Activated B cell treated with CpG ODN at 0.5 μM for 24 hours (primary cell): ENCODE measurements at regions of chrX and their contacts with region 1.

Region 1: GRCh38 chrX:19990556-19991349 is at the start of gene BCLAF3:
- DNase-seq: peak; percentile 83
- ATAC-seq: peak; percentile 92
- H3K4me3 Mint-ChIP-seq: peak within 1 kb of the TSS; percentile 86
- H3K27ac Mint-ChIP-seq: peak within 1 kb of the TSS; percentile 85
- H3K4me1 Mint-ChIP-seq: peaks cover 16% of the 10 kb centered on the region
- H3K27me3 Mint-ChIP-seq: no peaks in the 10 kb centered on the region
- CTCF ChIP-seq: no peak
- total RNA-seq, gene BCLAF3: 11.6 and 15.3 TPM in 2 replicates

Region 2: GRCh38 chrX:19544693-19545305 is 446.0 kb before region 1 on chrX:
- CTCF ChIA-PET with region 1: no interaction called
- POLR2A ChIA-PET with region 1: no interaction called
- intact Hi-C with region 1: loop called (anchors 1 kb)
- DNase-seq: no peak
- ATAC-seq: peak; percentile 60
- H3K4me3 Mint-ChIP-seq: no peak overlapping the region
- H3K27ac Mint-ChIP-seq: no peak overlapping the region
- H3K4me1 Mint-ChIP-seq: no peaks in the 10 kb centered on the region
- H3K27me3 Mint-ChIP-seq: no peaks in the 10 kb centered on the region
- CTCF ChIP-seq: no peak

Region 3: DNA sequence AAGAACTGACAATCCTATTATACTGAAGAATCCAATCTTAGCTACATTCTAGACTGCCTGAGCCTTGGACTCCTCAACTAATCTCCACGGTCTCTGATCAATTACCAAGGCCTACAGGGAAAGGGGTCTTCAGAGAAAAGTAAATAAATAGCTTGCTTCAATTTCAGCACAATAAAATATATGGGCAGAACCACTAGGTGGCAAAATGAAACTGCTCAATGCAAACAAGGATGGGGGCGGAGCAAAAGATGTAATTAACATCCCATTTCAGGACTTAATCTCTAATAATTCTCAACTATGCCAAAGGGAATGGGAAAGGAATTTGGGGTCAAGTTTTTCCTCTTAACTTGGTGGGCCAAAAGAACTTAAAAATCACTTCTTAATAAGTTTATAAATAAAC is 397.1 kb before region 1 on chrX:
- CTCF ChIA-PET with region 1: no interaction called
- POLR2A ChIA-PET with region 1: no interaction called
- intact Hi-C with region 1: loop called (anchors 1 kb)
- DNase-seq: no peak
- ATAC-seq: no peak
- H3K4me3 Mint-ChIP-seq: no peak overlapping the region
- H3K27ac Mint-ChIP-seq: no peak overlapping the region
- H3K4me1 Mint-ChIP-seq: peaks cover 2% of the 10 kb centered on the region
- H3K27me3 Mint-ChIP-seq: no peaks in the 10 kb centered on the region
- CTCF ChIP-seq: no peak

Region 4: DNA sequence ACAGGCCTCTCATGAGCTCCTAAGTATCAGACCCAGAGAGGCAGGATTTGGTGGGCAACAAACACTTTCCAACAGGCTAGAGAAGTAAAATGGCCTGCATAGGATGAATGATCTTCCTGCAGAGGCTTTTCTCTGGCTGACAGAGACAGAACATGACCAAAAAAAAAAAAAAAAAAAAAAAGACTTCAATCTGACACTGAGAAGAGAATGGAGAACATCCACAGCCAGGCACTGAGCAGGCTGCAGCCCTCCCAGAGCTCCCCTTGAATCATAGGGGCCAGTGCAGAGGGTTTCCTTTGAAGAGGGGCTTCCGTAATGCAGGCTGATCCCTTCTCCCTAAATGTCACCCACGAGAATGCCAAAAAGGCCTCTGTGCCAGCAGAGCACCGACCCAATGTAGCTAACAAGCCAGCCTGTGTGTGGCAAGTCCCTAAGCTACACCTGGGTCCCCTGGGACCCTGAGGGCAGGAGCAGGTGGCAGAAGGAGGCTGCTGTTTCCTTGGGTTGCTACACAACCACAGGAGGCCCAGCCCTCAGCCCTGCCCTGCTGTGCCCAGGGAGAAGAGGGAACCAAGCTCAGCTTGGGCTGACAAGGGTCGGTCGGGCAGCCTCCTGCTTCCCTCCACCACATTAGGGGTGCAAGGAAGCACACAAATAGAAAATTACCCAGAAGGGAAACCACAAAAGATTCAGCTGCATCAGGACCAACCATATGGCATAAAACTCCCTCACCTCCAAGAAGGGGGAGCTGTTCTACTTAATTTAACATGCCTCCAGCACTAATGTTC is 70.4 kb after region 1 on chrX:
- CTCF ChIA-PET with region 1: no interaction called
- POLR2A ChIA-PET with region 1: no interaction called
- intact Hi-C with region 1: loop called (anchors 1 kb)
- DNase-seq: peak; percentile 59
- ATAC-seq: peak; percentile 94
- H3K4me3 Mint-ChIP-seq: peak overlapping the region; percentile 41
- H3K27ac Mint-ChIP-seq: peak overlapping the region; percentile 89
- H3K4me1 Mint-ChIP-seq: peaks cover 32% of the 10 kb centered on the region
- H3K27me3 Mint-ChIP-seq: no peaks in the 10 kb centered on the region
- CTCF ChIP-seq: no peak